ENCODE measurements at regions of chr1 and their contacts with region 1.

Region 1: GRCh38 chr1:40040511-40041465 is at the start of gene CAP1:
- DNase-seq: peak; percentile 98 to 99 (median 98)
- H3K4me3 ChIP-seq: peak within 1 kb of the TSS; percentile 82 to 99 (median 89)
- H3K4me3 Mint-ChIP-seq: peak within 1 kb of the TSS; percentile 94 to 99
- H3K27ac ChIP-seq: peak within 1 kb of the TSS; percentile 94 to 99
- H3K27ac Mint-ChIP-seq: peak within 1 kb of the TSS; percentile 99 to 100 (median 100)
- H3K4me1 ChIP-seq: peaks cover 85 to 87% of the 10 kb centered on the region in 2 donors
- H3K4me1 Mint-ChIP-seq: peaks cover 82% of the 10 kb centered on the region
- H3K27me3 ChIP-seq: no peaks in the 10 kb centered on the region
- H3K27me3 Mint-ChIP-seq: peaks cover 0 to 4% (median 1%) of the 10 kb centered on the region in 3 donors
- CTCF ChIP-seq: no peak
- polyA plus RNA-seq, gene CAP1: 400 to 941 (median 876) TPM

Region 2: DNA sequence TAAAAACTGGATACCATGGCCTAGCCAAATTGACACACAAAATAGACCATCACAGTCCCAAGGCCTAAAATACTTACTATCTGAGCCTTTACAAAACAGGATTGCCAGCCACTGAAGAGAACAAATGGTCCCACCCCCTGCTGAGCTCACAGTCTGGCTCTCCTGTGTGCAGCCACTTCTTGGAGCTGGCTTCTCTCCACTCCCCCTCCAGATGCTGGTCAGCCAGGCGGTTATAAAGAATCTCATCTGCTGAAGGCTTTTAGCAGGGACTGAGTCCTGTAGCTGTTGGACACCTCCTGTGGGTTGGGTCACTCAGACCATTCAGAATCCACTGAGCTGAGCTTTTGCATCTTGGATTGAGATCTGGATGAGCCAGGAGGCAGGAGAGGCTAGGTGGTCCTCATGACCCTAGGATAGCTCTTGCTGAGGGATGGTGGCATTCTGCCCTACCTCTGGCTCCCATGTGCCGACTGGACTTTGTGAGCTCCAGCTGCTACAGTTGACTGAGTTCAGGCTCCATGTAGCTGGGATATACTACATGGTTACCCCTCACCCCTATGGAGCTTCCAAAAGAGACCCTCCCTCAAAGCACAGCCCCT is 285.8 kb before region 1 on chr1:
- intact Hi-C with region 1: no loop called
- DNase-seq: no peak
- H3K4me3 ChIP-seq: no peak overlapping the region
- H3K4me3 Mint-ChIP-seq: no peak overlapping the region
- H3K27ac ChIP-seq: no peak overlapping the region
- H3K27ac Mint-ChIP-seq: peak overlapping the region in 1 of 7 donors; percentile 48
- H3K4me1 ChIP-seq: no peaks in the 10 kb centered on the region
- H3K4me1 Mint-ChIP-seq: no peaks in the 10 kb centered on the region
- H3K27me3 ChIP-seq: no peaks in the 10 kb centered on the region
- H3K27me3 Mint-ChIP-seq: no peaks in the 10 kb centered on the region
- CTCF ChIP-seq: no peak

Region 3: GRCh38 chr1:39886757-39887231 is 154.0 kb before region 1 on chr1:
- intact Hi-C with region 1: loop called in 1 of 2 experiments (anchors 5 kb)
- DNase-seq: peak in 1 of 3 donors; percentile 30
- H3K4me3 ChIP-seq: no peak overlapping the region
- H3K4me3 Mint-ChIP-seq: no peak overlapping the region
- H3K27ac ChIP-seq: no peak overlapping the region
- H3K27ac Mint-ChIP-seq: peak overlapping the region in 1 of 7 donors; percentile 48
- H3K4me1 ChIP-seq: peaks cover 45 to 57% of the 10 kb centered on the region in 2 donors
- H3K4me1 Mint-ChIP-seq: peaks cover 37% of the 10 kb centered on the region
- H3K27me3 ChIP-seq: no peaks in the 10 kb centered on the region
- H3K27me3 Mint-ChIP-seq: peaks cover 0 to 7% (median 2%) of the 10 kb centered on the region in 3 donors
- CTCF ChIP-seq: no peak

Region 4: GRCh38 chr1:39981957-39982356 is 58.8 kb before region 1 on chr1:
- intact Hi-C with region 1: loop called in 1 of 2 experiments (anchors 10 kb)
- DNase-seq: no peak
- H3K4me3 ChIP-seq: no peak overlapping the region
- H3K4me3 Mint-ChIP-seq: no peak overlapping the region
- H3K27ac ChIP-seq: no peak overlapping the region
- H3K27ac Mint-ChIP-seq: no peak overlapping the region
- H3K4me1 ChIP-seq: peaks cover 9 to 16% of the 10 kb centered on the region in 2 donors
- H3K4me1 Mint-ChIP-seq: peaks cover 19% of the 10 kb centered on the region
- H3K27me3 ChIP-seq: no peaks in the 10 kb centered on the region
- H3K27me3 Mint-ChIP-seq: peaks cover 0 to 3% (median 0%) of the 10 kb centered on the region in 3 donors
- CTCF ChIP-seq: no peak

Region 5: DNA sequence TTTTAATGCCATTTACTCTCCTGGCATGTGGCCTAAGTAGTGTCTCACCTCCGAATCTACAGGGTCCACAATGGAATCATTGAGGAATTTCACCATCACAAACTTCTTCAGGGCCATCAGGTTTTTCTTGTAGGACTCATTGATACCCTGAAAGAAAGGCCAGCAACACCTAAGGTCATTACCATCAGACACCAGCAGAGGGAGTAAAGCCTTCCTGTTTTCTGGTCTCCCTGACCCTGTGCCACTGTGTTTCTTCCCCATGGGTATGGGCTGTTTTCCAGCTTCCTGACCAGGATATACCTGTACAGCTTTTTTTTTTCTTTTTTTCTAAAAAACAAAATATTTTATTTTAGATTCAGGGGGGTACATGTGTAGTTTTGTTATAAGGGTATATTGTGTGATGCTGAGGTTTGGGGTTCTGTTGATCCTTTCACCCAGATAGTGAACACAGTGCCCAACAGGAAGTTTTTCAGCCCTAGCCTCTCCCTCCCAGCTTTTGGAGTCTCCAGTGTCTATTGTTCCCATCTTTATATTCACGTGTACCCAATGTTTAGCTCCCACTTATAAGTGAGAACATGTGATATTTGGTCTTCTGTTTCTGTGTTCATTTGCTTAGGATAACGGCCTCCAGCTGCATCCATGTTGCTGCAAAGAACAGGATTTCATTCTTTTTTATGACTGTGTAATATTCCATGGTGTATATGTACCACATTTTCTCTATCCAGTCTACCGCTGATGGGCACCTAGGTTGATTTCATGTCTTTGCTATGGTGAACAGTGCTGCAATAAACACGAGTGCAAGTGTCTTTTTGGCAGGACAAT is 37.9 kb after region 1 on chr1:
- intact Hi-C with region 1: loop called in 1 of 2 experiments (anchors 5 kb)
- DNase-seq: peak; percentile 42 to 77 (median 69)
- H3K4me3 ChIP-seq: no peak overlapping the region
- H3K4me3 Mint-ChIP-seq: no peak overlapping the region
- H3K27ac ChIP-seq: peak overlapping the region in 1 of 2 donors; percentile 63
- H3K27ac Mint-ChIP-seq: peak overlapping the region in 4 of 7 donors; percentile 28 to 86 (median 63)
- H3K4me1 ChIP-seq: peaks cover 95 to 98% of the 10 kb centered on the region in 2 donors
- H3K4me1 Mint-ChIP-seq: peaks cover 89% of the 10 kb centered on the region
- H3K27me3 ChIP-seq: no peaks in the 10 kb centered on the region
- H3K27me3 Mint-ChIP-seq: peaks cover 0 to 9% (median 2%) of the 10 kb centered on the region in 3 donors
- CTCF ChIP-seq: peak; percentile 96

Region 6: GRCh38 chr1:40132383-40133311 is 91.9 kb after region 1 on chr1:
- intact Hi-C with region 1: no loop called
- DNase-seq: no peak
- H3K4me3 ChIP-seq: no peak overlapping the region
- H3K4me3 Mint-ChIP-seq: peak overlapping the region; percentile 43 to 63
- H3K27ac ChIP-seq: no peak overlapping the region
- H3K27ac Mint-ChIP-seq: no peak overlapping the region
- H3K4me1 ChIP-seq: no peaks in the 10 kb centered on the region
- H3K4me1 Mint-ChIP-seq: peaks cover 7% of the 10 kb centered on the region
- H3K27me3 ChIP-seq: no peaks in the 10 kb centered on the region
- H3K27me3 Mint-ChIP-seq: peaks cover 1 to 4% (median 4%) of the 10 kb centered on the region in 3 donors
- CTCF ChIP-seq: no peak

Measured in CD14-positive monocyte (primary cell).